Ascending aorta (tissue), 2 donors: ENCODE measurements at regions of chr2 and their contacts with region 1.

Region 1: DNA sequence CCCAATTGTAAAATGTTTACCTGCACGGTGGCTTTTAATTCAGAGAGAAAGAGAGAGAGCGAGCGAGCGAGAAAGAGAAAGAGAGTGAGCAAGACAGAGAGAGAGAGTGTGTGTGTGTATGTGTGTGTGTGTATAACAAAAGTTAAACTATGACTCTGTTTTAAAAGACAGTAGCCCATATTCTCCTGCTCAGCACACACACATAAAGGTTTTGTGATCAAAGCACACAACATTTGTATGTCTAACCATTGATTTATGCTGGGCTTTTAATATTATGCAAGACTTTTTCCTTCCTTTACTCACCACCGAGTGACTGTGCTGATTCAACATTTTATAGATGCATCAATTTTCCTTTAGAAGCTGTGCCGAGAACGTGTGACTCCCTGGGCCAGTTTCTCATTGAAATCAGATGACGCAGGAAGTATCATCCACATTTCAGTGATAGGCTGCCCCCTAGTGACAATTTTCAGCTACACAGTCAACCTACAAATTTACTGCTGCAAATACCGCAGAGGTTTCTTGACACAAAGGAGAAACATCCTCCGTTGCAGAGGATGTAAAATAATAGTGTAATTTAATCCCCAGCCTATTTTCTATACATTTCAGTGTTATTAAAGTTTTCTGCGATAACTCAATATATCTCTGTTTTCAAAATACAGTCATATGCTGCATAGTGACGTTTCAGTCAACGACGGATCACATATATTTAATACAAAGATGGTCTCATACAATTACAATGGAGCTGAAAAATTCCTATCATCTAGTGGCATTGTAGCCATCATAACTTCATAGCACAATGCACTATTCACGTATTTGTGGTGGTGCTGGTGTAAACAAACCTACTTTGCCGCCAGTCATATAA is 165.9 kb upstream of the TANK start:
- DNase-seq: peak; percentile 22 to 90
- H3K4me3 ChIP-seq: peak overlapping the region in 1 of 2 donors; percentile 3
- H3K27ac ChIP-seq: no peak overlapping the region
- H3K4me1 ChIP-seq: peaks cover 0 to 2% of the 10 kb centered on the region in 2 donors
- H3K27me3 ChIP-seq: no peaks in the 10 kb centered on the region
- CTCF ChIP-seq: peak; percentile 66 to 88 (median 87)

Region 2: GRCh38 chr2:160109936-160110673 is 884.3 kb before region 1 on chr2:
- intact Hi-C with region 1: loop called (anchors 2 kb)
- DNase-seq: peak in 1 of 2 donors; percentile 82
- H3K4me3 ChIP-seq: no peak overlapping the region
- H3K27ac ChIP-seq: no peak overlapping the region
- H3K4me1 ChIP-seq: no peaks in the 10 kb centered on the region
- H3K27me3 ChIP-seq: no peaks in the 10 kb centered on the region
- CTCF ChIP-seq: peak; percentile 76 to 86 (median 81)

Region 3: DNA sequence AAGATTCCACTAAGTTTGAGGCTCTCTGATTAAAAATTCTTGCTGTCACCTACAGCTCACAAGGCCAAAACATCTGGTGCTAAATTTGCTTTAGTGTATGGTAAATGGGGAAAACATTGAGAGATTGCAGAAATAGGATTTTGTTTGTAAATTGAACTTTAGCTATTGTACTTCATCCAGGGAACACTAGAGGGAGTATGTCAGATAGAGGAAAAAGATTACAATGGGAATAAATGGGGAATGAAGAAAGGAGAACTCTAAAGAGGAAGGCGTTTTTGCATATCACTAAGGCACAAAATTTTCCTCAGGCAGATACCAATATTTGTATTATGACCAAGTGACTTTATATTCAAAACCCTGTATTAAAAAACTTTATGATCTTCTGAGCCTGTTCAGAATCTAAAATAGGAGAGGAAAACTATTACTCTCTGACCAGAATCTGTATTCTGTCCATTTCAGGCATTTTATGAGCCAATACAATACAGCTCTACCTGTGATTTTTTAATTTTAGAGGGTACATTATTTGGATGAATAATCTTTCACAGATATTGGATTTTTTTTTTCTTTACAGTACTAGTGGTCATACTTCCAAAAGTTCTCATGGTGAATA is 742.0 kb before region 1 on chr2:
- intact Hi-C with region 1: loop called (anchors 10 kb)
- DNase-seq: no peak
- H3K4me3 ChIP-seq: no peak overlapping the region
- H3K27ac ChIP-seq: peak overlapping the region in 1 of 2 donors; percentile 42
- H3K4me1 ChIP-seq: no peaks in the 10 kb centered on the region
- H3K27me3 ChIP-seq: no peaks in the 10 kb centered on the region
- CTCF ChIP-seq: peak; percentile 73 to 85 (median 78)

Region 4: GRCh38 chr2:160324161-160324800 is 670.1 kb before region 1 on chr2:
- intact Hi-C with region 1: loop called (anchors 2 kb)
- DNase-seq: peak in 1 of 2 donors; percentile 78
- H3K4me3 ChIP-seq: no peak overlapping the region
- H3K27ac ChIP-seq: no peak overlapping the region
- H3K4me1 ChIP-seq: peaks cover 1 to 23% of the 10 kb centered on the region in 2 donors
- H3K27me3 ChIP-seq: no peaks in the 10 kb centered on the region
- CTCF ChIP-seq: peak; percentile 27 to 81 (median 66)

Region 5: DNA sequence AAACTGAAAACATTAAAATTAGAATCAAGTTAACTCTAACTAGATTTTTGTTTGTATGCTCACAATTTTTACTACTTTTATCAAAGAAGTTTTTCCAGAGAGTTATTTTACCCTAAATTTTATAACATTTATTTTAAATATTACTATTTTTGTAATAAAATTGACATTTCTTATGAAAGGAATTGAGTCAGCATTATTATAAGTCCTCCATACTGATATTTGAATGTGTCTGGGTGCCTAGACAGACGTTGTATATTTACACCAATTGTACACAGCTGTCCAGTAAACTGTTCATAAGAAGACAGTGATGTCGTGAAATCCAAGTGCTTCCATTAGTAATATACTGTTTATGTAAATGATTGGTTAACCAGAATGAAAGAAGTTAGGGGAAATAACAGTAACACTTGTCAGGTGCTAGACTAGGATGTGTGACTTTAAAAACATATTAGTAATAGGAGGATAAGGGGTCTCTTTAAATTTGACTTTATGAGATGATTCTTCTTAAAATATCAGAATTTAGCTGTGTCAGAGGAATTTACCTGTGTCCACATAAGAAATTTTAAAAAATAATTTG is 239.6 kb after region 1 on chr2:
- intact Hi-C with region 1: no loop called
- DNase-seq: no peak
- H3K4me3 ChIP-seq: no peak overlapping the region
- H3K27ac ChIP-seq: no peak overlapping the region
- H3K4me1 ChIP-seq: peaks cover 0 to 8% of the 10 kb centered on the region in 2 donors
- H3K27me3 ChIP-seq: no peaks in the 10 kb centered on the region
- CTCF ChIP-seq: no peak